ENCODE measurements at regions of chr2 and their contacts with region 1.

Region 1: GRCh38 chr2:201071479-201072200 is at the starts of genes HYCC2 and NDUFB3:
- DNase-seq: peak; percentile 79 to 95
- H3K4me3 ChIP-seq: peak within 1 kb of the TSS; percentile 87 to 93
- H3K27ac ChIP-seq: peak within 1 kb of the TSS; percentile 80 to 84
- H3K4me1 ChIP-seq: peaks cover 12 to 18% of the 10 kb centered on the region in 2 donors
- H3K27me3 ChIP-seq: no peaks in the 10 kb centered on the region
- CTCF ChIP-seq: peak in 2 of 3 experiments; percentile 12 to 40
- total RNA-seq, gene HYCC2: 2.1 TPM
- total RNA-seq, gene NDUFB3: 34.2 TPM

Region 2: GRCh38 chr2:200901459-200902072 is 170.1 kb before region 1 on chr2:
- intact Hi-C with region 1: loop called (anchors 1 kb)
- DNase-seq: peak in 1 of 2 donors; percentile 79
- H3K4me3 ChIP-seq: no peak overlapping the region
- H3K27ac ChIP-seq: no peak overlapping the region
- H3K4me1 ChIP-seq: no peaks in the 10 kb centered on the region
- H3K27me3 ChIP-seq: no peaks in the 10 kb centered on the region
- CTCF ChIP-seq: peak; percentile 62 to 65 (median 65)

Region 3: DNA sequence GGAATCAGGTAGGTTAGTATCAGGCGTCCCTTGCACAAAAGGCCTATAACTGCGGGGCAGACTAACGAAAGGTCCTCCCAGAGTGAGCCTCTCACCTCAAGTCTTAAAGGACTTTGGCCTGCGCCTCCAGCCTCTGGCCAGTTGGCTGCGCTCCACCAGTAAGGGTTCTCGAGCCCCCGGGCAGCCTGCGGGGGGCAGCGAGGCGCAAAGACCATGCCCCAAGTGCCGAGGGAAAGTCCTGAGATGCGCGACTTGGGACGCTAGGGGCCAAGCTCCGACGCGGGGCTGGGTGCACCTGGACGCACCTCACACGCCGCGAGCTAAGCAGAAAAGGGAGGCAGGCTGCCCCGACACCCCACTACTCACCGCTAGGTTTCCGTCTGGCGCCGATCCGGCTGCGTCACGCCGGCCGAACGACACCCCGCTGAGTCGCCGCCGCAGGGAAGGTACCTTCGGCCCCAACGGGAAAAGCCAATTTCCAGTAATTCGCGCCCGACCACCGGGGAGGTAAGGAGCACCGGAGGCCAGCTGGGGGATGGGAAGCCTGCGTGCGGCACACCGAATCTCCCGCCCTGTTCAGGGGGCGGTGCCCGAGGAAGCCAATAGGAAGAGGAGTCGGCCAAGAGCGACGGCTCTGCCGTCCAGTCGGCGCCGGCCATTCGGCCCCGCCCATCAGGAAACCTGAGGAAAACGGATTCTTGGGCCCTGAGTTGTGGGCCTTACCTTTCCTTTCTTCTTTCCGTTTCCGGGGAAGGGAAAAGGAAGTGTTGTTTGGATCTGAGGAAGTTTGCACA is 108.3 kb before region 1 on chr2 and contains the start of gene ORC2:
- intact Hi-C with region 1: loop called (anchors 1 kb)
- DNase-seq: peak; percentile 78 to 97
- H3K4me3 ChIP-seq: peak within 1 kb of the TSS; percentile 85 to 86
- H3K27ac ChIP-seq: peak within 1 kb of the TSS; percentile 71 to 82
- H3K4me1 ChIP-seq: peaks cover 0 to 8% of the 10 kb centered on the region in 2 donors
- H3K27me3 ChIP-seq: no peaks in the 10 kb centered on the region
- CTCF ChIP-seq: peak; percentile 44 to 73 (median 50)
- total RNA-seq, gene ORC2: 5.2 TPM

Region 4: GRCh38 chr2:201118121-201118960 is 46.7 kb after region 1 on chr2:
- intact Hi-C with region 1: loop called (anchors 2 kb)
- DNase-seq: peak; percentile 55 to 91
- H3K4me3 ChIP-seq: peak overlapping the region; percentile 77 to 85
- H3K27ac ChIP-seq: peak overlapping the region; percentile 99
- H3K4me1 ChIP-seq: peaks cover 3 to 16% of the 10 kb centered on the region in 2 donors
- H3K27me3 ChIP-seq: no peaks in the 10 kb centered on the region
- CTCF ChIP-seq: peak in 2 of 3 experiments; percentile 3 to 53